ENCODE measurements at regions of chr12 and their contacts with region 1.

Region 1: DNA sequence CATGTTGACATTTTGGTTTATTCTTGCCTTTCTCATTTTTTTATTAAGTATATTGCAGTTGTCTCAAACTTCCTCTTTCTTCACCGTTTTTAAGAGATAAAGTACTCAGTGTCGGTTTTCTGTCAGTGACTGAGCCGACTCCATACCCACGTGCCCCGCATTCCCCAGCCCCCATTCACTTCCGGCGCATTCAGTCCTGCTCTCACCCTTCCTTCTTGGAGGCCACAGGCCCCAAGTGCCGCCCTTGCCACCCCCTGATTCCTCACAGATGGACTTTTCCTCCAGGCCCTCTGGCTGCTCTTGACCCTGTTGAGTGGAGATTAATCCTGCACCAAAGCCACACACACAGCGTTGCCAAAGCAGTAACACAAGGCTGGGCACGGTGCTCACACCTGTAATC is 19.1 kb upstream of the DNAH10 start:
- DNase-seq: no peak

Region 2: DNA sequence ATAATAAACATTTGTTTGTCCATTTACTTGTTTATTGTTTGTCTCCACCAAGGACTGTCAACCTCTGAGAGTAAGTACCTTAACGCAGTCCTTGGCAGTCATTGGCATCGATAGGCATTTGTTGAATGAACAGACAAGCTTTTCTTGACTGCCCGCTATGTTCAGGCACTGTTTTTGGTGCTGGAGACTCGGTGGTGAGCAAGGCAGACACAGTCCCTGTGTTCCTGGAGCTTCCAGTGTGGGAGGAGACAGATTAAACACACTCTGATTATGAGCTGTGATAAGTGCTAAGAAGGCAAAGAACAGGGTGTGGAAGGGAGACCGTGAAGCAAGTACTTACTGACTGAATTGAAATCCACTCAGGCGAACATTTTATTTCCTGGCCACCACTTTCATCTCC is 29.6 kb before region 1 on chr12:
- intact Hi-C with region 1: loop called in 1 of 2 experiments (anchors 2 kb)
- DNase-seq: no peak

Region 3: DNA sequence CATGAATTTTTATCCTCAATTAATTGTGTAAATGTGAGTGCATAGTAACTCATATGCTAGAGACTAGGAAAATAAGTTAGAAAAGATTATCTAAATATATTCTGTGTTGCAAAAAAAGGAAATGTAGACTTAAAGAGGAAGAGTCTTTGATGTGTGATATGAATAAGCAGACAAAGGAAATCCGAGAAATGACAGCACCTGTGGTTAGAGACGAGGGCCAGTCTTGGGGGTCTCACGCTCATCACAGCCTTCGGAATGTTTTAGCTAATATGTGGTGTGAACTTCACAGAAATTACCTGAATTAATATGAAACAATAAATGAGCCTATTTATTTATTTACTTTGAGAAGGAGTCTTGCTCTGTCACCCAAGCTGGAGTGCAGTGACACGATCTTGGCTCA is 19.2 kb before region 1 on chr12:
- intact Hi-C with region 1: loop called in 1 of 2 experiments (anchors 1 kb)
- DNase-seq: no peak